ENCODE measurements at regions of chr11 and their contacts with region 1.

Region 1: DNA sequence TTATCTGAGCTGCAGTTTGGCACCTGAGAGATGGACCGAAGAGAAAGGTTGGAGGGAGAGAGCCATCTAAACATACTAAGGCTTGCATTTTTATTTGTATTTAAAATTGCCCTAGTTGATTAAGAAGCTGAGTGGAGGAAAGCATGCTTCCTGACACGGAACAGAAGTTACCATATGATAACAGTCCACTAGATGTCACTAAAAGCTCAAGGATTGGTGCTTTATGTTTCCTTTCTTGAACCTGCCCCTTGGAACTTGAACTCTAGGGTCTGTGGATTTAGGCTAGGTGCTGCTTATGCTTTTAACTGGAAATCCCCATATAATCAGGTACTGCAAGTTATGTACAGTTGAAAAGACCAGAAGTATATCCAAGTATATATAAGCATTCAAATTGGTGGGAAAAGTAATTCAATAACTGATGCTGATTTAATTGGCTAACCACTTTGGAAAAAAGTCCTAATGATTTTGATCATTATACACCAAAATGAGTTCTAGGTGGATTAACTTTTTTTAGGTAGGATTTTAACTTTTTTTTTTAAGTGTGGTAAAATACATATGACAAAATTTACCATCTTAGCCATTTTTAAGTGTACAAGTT is 9.5 kb downstream of the RBMXL2 start:
- DNase-seq: peak; percentile 72
- ATAC-seq: peak; percentile 73
- H3K4me3 ChIP-seq: no peak overlapping the region
- H3K4me3 Mint-ChIP-seq: no peak overlapping the region
- H3K27ac ChIP-seq: no peak overlapping the region
- H3K27ac Mint-ChIP-seq: no peak overlapping the region
- H3K4me1 ChIP-seq: no peaks in the 10 kb centered on the region
- H3K4me1 Mint-ChIP-seq: no peaks in the 10 kb centered on the region
- H3K27me3 ChIP-seq: peaks cover 0 to 3% (median 0%) of the 10 kb centered on the region in 4 experiments
- H3K27me3 Mint-ChIP-seq: peaks cover 24% of the 10 kb centered on the region
- CTCF ChIP-seq: peak; percentile 86

Region 2: DNA sequence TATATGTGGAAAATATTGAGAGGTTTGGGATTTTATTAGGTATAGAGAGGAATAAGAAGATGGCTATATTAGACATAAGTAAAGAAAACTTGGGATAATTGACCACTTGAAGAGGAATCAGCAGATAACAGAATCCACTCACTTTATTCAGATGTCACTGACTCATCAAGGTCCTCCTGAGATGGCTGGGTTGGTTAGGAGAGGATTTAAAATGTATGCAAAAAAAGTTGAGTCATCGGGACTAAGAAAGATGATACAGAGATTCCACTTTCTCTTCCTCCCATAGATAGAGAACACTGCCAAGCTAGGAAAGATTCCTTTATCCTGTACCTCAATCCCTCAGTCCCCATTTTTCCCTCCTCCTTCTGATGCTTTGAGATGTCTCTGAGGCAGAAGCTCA is 298.9 kb before region 1 on chr11 and contains the start of gene OR6A2:
- CTCF ChIA-PET with region 1: no interaction called
- POLR2A ChIA-PET with region 1: no interaction called
- intact Hi-C with region 1: no loop called
- DNase-seq: no peak
- ATAC-seq: no peak
- H3K4me3 ChIP-seq: no peak within 1 kb of the TSS
- H3K4me3 Mint-ChIP-seq: no peak within 1 kb of the TSS
- H3K27ac ChIP-seq: no peak within 1 kb of the TSS
- H3K27ac Mint-ChIP-seq: no peak within 1 kb of the TSS
- H3K4me1 ChIP-seq: no peaks in the 10 kb centered on the region
- H3K4me1 Mint-ChIP-seq: no peaks in the 10 kb centered on the region
- H3K27me3 ChIP-seq: peaks cover 0 to 6% (median 0%) of the 10 kb centered on the region in 4 experiments
- H3K27me3 Mint-ChIP-seq: peaks cover 4% of the 10 kb centered on the region
- CTCF ChIP-seq: no peak
- total RNA-seq, gene OR6A2: 0.10 and 0.12 TPM in 2 replicates

Region 3: DNA sequence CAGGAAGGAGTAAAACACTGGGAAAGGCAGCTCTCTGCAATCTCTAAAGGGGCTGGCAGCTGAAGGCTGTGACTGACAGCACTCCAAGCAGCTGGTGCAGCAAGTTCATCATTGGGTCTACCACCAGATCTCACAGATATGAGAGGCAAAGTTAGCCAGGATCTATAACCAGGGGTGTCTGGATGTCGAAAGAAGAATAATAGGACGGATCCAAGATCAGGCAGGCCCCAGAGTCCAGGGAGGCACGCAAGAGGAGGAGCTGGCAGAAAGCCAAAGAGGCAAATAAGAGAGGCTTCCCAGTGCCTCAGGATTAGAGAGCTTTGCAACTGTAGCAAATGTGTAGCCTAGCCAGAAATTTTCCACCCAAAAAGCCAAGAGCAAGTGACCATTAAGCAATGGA is 67.6 kb after region 1 on chr11:
- CTCF ChIA-PET with region 1: no interaction called
- POLR2A ChIA-PET with region 1: no interaction called
- intact Hi-C with region 1: no loop called
- DNase-seq: no peak
- ATAC-seq: no peak
- H3K4me3 ChIP-seq: no peak overlapping the region
- H3K4me3 Mint-ChIP-seq: no peak overlapping the region
- H3K27ac ChIP-seq: no peak overlapping the region
- H3K27ac Mint-ChIP-seq: no peak overlapping the region
- H3K4me1 ChIP-seq: no peaks in the 10 kb centered on the region
- H3K4me1 Mint-ChIP-seq: no peaks in the 10 kb centered on the region
- H3K27me3 ChIP-seq: peaks cover 0 to 3% (median 0%) of the 10 kb centered on the region in 4 experiments
- H3K27me3 Mint-ChIP-seq: peaks cover 7% of the 10 kb centered on the region
- CTCF ChIP-seq: no peak

Region 4: DNA sequence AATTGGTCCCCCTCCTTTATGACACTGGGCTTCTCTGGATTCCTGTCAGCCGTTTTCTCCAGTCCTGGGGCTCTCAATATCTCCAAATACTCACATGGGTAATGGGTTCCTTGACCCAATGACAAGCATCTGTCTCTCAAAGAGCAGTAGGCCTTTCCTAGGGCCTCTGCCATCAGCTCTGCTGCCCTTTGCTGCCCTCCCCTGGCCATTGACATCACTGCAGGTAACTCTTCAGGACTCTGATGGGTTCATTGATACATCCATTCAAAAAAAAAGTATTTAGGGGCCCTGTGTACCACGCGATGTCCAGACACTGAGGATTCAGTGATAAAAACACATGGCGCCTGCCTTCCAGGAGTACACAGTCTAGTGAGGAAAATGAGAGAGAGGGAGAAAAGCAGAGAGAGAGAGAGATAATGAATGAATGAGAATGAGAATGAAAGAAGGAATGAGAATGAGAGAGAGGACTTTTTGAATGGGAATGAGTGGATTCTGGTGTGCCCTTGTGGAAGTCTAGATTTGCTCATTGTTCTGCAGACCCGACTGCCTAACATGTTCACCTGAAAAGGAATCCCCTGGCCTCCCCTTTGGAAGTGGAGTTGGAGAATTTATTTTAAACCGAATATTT is 344.4 kb after region 1 on chr11:
- CTCF ChIA-PET with region 1: interaction called, 28 read pairs
- POLR2A ChIA-PET with region 1: no interaction called
- intact Hi-C with region 1: loop called (anchors 1 kb)
- DNase-seq: peak; percentile 76
- ATAC-seq: peak; percentile 96
- H3K4me3 ChIP-seq: no peak overlapping the region
- H3K4me3 Mint-ChIP-seq: no peak overlapping the region
- H3K27ac ChIP-seq: no peak overlapping the region
- H3K27ac Mint-ChIP-seq: no peak overlapping the region
- H3K4me1 ChIP-seq: no peaks in the 10 kb centered on the region
- H3K4me1 Mint-ChIP-seq: peaks cover 2% of the 10 kb centered on the region
- H3K27me3 ChIP-seq: no peaks in the 10 kb centered on the region
- H3K27me3 Mint-ChIP-seq: no peaks in the 10 kb centered on the region
- CTCF ChIP-seq: peak; percentile 94

Region 5: DNA sequence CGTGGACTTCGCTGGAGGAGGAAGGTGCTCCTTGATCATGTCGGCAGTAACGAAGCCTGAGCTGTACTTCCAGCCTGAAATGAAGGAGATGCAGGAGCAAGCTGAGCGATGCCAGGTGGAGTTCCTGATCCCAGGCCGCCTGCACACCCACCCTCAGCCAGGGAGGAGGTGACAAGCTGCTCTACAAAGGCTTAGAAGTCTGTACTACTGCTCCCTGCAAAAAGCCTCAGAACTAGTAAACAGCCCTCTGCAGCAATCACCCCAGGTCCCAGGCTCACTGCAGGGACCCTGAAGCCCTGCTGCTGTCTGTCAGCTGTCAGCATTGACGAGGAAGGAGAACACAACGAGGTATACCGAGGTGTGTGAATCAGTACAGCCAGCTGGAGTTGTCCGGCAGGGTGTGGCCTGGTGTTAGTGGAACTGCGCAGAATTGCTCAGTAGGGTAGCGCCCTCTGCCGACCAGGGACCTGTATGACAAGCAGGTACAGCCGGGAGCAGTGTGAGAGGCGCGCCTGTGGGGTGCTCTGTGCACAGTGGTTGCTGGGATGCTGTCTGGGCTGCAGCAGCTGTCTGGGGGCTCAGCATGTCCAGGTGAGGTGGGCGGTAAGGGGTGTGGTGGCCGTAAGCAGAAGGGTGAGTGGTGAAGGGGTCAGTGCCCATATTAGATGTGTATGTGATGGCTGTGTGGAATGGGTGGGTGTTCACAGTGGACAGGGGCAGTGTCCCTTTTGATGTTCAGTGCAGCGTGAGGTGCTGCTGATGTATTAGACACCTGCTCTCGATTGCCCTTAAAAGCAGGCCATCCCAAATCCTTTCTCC is 567.3 kb after region 1 on chr11:
- CTCF ChIA-PET with region 1: interaction called, 27 read pairs
- POLR2A ChIA-PET with region 1: no interaction called
- intact Hi-C with region 1: loop called (anchors 1 kb)
- DNase-seq: peak; percentile 81
- ATAC-seq: peak; percentile 100
- H3K4me3 ChIP-seq: no peak overlapping the region
- H3K4me3 Mint-ChIP-seq: no peak overlapping the region
- H3K27ac ChIP-seq: no peak overlapping the region
- H3K27ac Mint-ChIP-seq: no peak overlapping the region
- H3K4me1 ChIP-seq: peaks cover 0 to 8% of the 10 kb centered on the region in 2 donors
- H3K4me1 Mint-ChIP-seq: peaks cover 4% of the 10 kb centered on the region
- H3K27me3 ChIP-seq: no peaks in the 10 kb centered on the region
- H3K27me3 Mint-ChIP-seq: no peaks in the 10 kb centered on the region
- CTCF ChIP-seq: peak; percentile 94

Region 6: GRCh38 chr11:7688238-7688826 is 590.0 kb after region 1 on chr11:
- CTCF ChIA-PET with region 1: interaction called, 137 read pairs
- POLR2A ChIA-PET with region 1: no interaction called
- intact Hi-C with region 1: loop called (anchors 1 kb)
- DNase-seq: peak; percentile 48
- ATAC-seq: peak; percentile 54
- H3K4me3 ChIP-seq: no peak overlapping the region
- H3K4me3 Mint-ChIP-seq: no peak overlapping the region
- H3K27ac ChIP-seq: no peak overlapping the region
- H3K27ac Mint-ChIP-seq: no peak overlapping the region
- H3K4me1 ChIP-seq: no peaks in the 10 kb centered on the region
- H3K4me1 Mint-ChIP-seq: no peaks in the 10 kb centered on the region
- H3K27me3 ChIP-seq: peaks cover 0 to 5% (median 3%) of the 10 kb centered on the region in 4 experiments
- H3K27me3 Mint-ChIP-seq: peaks cover 31% of the 10 kb centered on the region
- CTCF ChIP-seq: peak; percentile 90

Region 7: DNA sequence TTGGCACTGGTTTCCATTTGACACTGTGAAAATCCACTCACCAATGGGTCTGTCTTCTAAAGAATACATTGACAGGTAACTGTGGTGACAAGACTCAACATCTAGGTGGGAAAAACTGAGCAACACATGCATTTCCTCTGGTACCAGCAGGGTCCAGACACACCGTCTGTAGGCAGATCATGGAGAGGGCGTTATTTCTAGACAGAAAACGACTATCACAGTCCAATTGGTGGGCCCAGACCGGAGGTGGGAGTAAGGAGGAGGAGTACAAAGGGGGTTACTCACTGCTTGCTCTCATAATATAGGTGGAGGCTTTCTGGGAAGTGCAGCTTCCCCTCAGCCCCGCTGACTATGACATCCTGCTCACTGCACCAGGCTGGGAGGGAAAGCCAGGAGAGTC is 598.1 kb after region 1 on chr11:
- CTCF ChIA-PET with region 1: interaction called, 137 read pairs
- POLR2A ChIA-PET with region 1: no interaction called
- intact Hi-C with region 1: loop called (anchors 1 kb)
- DNase-seq: no peak
- ATAC-seq: no peak
- H3K4me3 ChIP-seq: no peak overlapping the region
- H3K4me3 Mint-ChIP-seq: no peak overlapping the region
- H3K27ac ChIP-seq: no peak overlapping the region
- H3K27ac Mint-ChIP-seq: no peak overlapping the region
- H3K4me1 ChIP-seq: peaks cover 2 to 3% of the 10 kb centered on the region in 2 donors
- H3K4me1 Mint-ChIP-seq: no peaks in the 10 kb centered on the region
- H3K27me3 ChIP-seq: peaks cover 0 to 21% (median 16%) of the 10 kb centered on the region in 4 experiments
- H3K27me3 Mint-ChIP-seq: peaks cover 41% of the 10 kb centered on the region
- CTCF ChIP-seq: no peak

Region 8: GRCh38 chr11:8099291-8099899 is 1001.1 kb after region 1 on chr11:
- CTCF ChIA-PET with region 1: interaction called, 22 read pairs
- POLR2A ChIA-PET with region 1: no interaction called
- intact Hi-C with region 1: loop called (anchors 2 kb)
- DNase-seq: peak; percentile 69
- ATAC-seq: peak; percentile 64
- H3K4me3 ChIP-seq: no peak overlapping the region
- H3K4me3 Mint-ChIP-seq: no peak overlapping the region
- H3K27ac ChIP-seq: no peak overlapping the region
- H3K27ac Mint-ChIP-seq: no peak overlapping the region
- H3K4me1 ChIP-seq: no peaks in the 10 kb centered on the region
- H3K4me1 Mint-ChIP-seq: peaks cover 2% of the 10 kb centered on the region
- H3K27me3 ChIP-seq: no peaks in the 10 kb centered on the region
- H3K27me3 Mint-ChIP-seq: no peaks in the 10 kb centered on the region
- CTCF ChIP-seq: peak; percentile 88